Activated B cell treated with CpG ODN at 0.5 μM for 24 hours (primary cell): ENCODE measurements at regions of chr6 and their contacts with region 1.

Region 1: GRCh38 chr6:159862103-159862502 is 28.7 kb upstream of the MAS1 start:
- DNase-seq: no peak
- ATAC-seq: no peak
- H3K4me3 Mint-ChIP-seq: no peak overlapping the region
- H3K27ac Mint-ChIP-seq: no peak overlapping the region
- H3K4me1 Mint-ChIP-seq: no peaks in the 10 kb centered on the region
- H3K27me3 Mint-ChIP-seq: peaks cover 21% of the 10 kb centered on the region
- CTCF ChIP-seq: no peak

Region 2: GRCh38 chr6:159941286-159942113 is 79.4 kb after region 1 on chr6:
- CTCF ChIA-PET with region 1: interaction called, 6 read pairs
- POLR2A ChIA-PET with region 1: no interaction called
- intact Hi-C with region 1: loop called (anchors 1 kb)
- DNase-seq: no peak
- ATAC-seq: peak; percentile 69
- H3K4me3 Mint-ChIP-seq: no peak overlapping the region
- H3K27ac Mint-ChIP-seq: no peak overlapping the region
- H3K4me1 Mint-ChIP-seq: no peaks in the 10 kb centered on the region
- H3K27me3 Mint-ChIP-seq: peaks cover 10% of the 10 kb centered on the region
- CTCF ChIP-seq: no peak

Region 3: GRCh38 chr6:160069050-160069454 is 206.9 kb after region 1 on chr6:
- CTCF ChIA-PET with region 1: interaction called, 3 read pairs
- POLR2A ChIA-PET with region 1: no interaction called
- intact Hi-C with region 1: loop called (anchors 1 kb)
- DNase-seq: peak; percentile 38
- ATAC-seq: peak; percentile 89
- H3K4me3 Mint-ChIP-seq: peak overlapping the region; percentile 42
- H3K27ac Mint-ChIP-seq: peak overlapping the region; percentile 5
- H3K4me1 Mint-ChIP-seq: peaks cover 40% of the 10 kb centered on the region
- H3K27me3 Mint-ChIP-seq: no peaks in the 10 kb centered on the region
- CTCF ChIP-seq: no peak

Region 4: GRCh38 chr6:160137989-160138835 is 276.1 kb after region 1 on chr6:
- CTCF ChIA-PET with region 1: interaction called, 4 read pairs
- POLR2A ChIA-PET with region 1: no interaction called
- intact Hi-C with region 1: loop called (anchors 1 kb)
- DNase-seq: no peak
- ATAC-seq: no peak
- H3K4me3 Mint-ChIP-seq: no peak overlapping the region
- H3K27ac Mint-ChIP-seq: no peak overlapping the region
- H3K4me1 Mint-ChIP-seq: no peaks in the 10 kb centered on the region
- H3K27me3 Mint-ChIP-seq: no peaks in the 10 kb centered on the region
- CTCF ChIP-seq: no peak

Region 5: DNA sequence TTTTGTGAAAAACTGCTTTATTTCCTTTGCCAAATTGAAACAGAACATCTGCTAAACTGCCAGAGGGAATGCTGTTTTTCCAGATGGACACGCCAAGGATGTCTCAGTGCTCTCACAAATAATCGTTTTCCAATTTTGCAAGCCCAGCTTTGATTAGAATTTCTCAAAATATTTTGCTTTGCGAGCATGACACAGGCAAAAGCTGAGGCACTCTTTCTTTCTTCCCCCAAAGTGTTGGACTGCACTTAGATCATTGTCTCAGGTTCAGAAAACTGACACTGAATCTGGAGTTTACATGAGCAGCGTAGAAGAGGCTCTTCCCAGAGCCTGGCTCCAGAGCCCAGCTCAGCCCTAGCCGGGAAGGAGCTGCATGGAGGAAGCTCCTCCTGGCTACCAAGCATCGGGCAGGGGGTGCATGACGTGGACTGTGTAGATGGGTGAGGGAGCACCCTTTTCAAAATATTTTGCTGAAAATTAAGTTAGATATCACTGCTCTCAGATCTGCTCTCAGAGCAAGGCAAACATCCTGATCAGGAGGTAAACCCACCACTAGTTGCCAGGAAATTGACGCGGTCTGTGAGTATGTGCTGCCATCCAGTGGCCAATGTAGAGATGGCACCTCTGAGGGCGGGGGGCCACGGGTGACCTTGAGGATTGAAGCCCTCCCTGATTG is 593.6 kb after region 1 on chr6:
- CTCF ChIA-PET with region 1: interaction called, 32 read pairs
- POLR2A ChIA-PET with region 1: no interaction called
- intact Hi-C with region 1: loop called (anchors 1 kb)
- DNase-seq: peak; percentile 52
- ATAC-seq: peak; percentile 88
- H3K4me3 Mint-ChIP-seq: no peak overlapping the region
- H3K27ac Mint-ChIP-seq: no peak overlapping the region
- H3K4me1 Mint-ChIP-seq: peaks cover 18% of the 10 kb centered on the region
- H3K27me3 Mint-ChIP-seq: peaks cover 11% of the 10 kb centered on the region
- CTCF ChIP-seq: peak; percentile 27

Region 6: DNA sequence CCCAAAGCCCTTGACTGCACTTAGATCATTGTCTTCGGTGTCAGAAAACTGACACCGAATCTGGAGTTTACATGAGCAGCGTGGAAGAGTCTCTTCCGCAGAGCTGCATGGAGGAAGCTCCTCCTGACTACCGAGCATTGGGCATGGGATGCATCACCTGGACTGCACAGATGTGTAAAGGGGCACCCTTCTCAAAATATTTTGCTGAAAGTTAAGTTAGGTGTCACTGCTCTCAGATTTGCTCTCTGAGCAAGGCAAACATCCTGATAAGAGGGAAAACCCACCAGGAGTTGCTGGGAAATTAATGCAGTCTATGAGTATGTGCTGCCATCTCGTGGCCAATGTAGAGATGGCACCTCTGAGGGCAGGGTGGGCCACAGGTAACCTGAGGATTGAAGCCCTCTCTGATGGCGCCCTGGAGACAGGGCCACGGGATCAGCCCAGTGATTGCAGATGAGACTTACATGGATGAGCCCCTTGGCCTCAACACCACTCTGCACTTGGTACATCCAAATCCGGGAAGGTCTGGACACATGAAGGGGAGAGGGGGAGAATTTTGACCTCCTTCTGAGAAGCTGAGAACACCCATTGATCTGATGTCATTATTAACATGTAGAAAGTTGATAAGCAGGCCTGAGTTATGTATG is 672.1 kb after region 1 on chr6:
- CTCF ChIA-PET with region 1: interaction called, 24 read pairs
- POLR2A ChIA-PET with region 1: no interaction called
- intact Hi-C with region 1: no loop called
- DNase-seq: peak; percentile 32
- ATAC-seq: peak; percentile 56
- H3K4me3 Mint-ChIP-seq: no peak overlapping the region
- H3K27ac Mint-ChIP-seq: no peak overlapping the region
- H3K4me1 Mint-ChIP-seq: no peaks in the 10 kb centered on the region
- H3K27me3 Mint-ChIP-seq: peaks cover 9% of the 10 kb centered on the region
- CTCF ChIP-seq: peak; percentile 63

Region 7: DNA sequence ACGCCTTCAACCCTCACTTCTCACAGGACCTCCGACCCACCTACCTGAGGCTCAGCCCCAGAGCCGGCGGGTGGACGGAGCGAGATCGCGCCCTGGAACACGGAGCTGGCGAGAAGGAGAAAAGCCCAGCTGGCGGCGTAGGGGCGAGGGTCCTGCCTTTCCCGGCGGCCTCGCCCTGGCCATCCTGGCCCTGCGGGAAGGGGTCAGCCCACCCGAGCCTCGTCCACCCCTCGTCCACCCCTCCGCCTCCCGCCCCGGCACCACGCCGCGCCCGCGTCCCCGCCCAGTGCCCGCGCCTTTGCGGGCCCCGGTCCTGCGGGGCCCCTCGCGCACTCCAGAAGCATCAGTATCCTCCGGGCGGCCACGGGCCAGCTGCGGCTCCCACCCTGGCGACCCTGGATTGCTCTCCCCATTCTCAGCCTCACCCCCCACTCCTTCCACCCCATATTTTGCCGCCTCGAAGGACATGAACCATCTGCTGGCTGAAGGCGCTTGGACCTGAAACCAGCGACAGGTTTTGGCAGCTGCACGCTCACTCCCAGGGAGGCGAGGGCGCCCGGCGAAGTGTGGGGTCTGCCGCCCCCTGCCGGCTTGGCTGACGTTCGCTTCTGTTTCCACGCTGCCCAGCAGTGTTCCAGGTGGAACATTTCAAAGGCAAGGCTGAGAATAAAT is 905.0 kb after region 1 on chr6:
- CTCF ChIA-PET with region 1: no interaction called
- POLR2A ChIA-PET with region 1: no interaction called
- intact Hi-C with region 1: loop called (anchors 5 kb)
- DNase-seq: peak; percentile 44
- ATAC-seq: peak; percentile 81
- H3K4me3 Mint-ChIP-seq: peak overlapping the region; percentile 77
- H3K27ac Mint-ChIP-seq: no peak overlapping the region
- H3K4me1 Mint-ChIP-seq: peaks cover 8% of the 10 kb centered on the region
- H3K27me3 Mint-ChIP-seq: peaks cover 36% of the 10 kb centered on the region
- CTCF ChIP-seq: peak; percentile 48